Esophagus muscularis mucosa (tissue), 4 donors: ENCODE measurements at regions of chr21 and their contacts with region 1.

Region 1: GRCh38 chr21:36156339-36156814 is 247 bp upstream of the DOP1B start:
- DNase-seq: peak; percentile 100
- H3K4me3 ChIP-seq: peak overlapping the region; percentile 89 to 99 (median 98)
- H3K27ac ChIP-seq: peak overlapping the region; percentile 82 to 90 (median 86)
- H3K4me1 ChIP-seq: peaks cover 7 to 22% (median 20%) of the 10 kb centered on the region in 4 donors
- H3K27me3 ChIP-seq: no peaks in the 10 kb centered on the region
- CTCF ChIP-seq: no peak
- EP300 ChIP-seq: no peak
- POLR2A ChIP-seq: no peak

Region 2: GRCh38 chr21:35882791-35883240 is 273.6 kb before region 1 on chr21:
- intact Hi-C with region 1: no loop called
- DNase-seq: no peak
- H3K4me3 ChIP-seq: no peak overlapping the region
- H3K27ac ChIP-seq: no peak overlapping the region
- H3K4me1 ChIP-seq: no peaks in the 10 kb centered on the region
- H3K27me3 ChIP-seq: peaks cover 0 to 25% (median 0%) of the 10 kb centered on the region in 4 donors
- CTCF ChIP-seq: no peak
- EP300 ChIP-seq: no peak
- POLR2A ChIP-seq: no peak

Region 3: GRCh38 chr21:36135391-36136102 is 20.8 kb before region 1 on chr21:
- intact Hi-C with region 1: loop called (anchors 2 kb)
- DNase-seq: peak; percentile 95
- H3K4me3 ChIP-seq: peak overlapping the region; percentile 72 to 84 (median 81)
- H3K27ac ChIP-seq: peak overlapping the region; percentile 90 to 96 (median 92)
- H3K4me1 ChIP-seq: peaks cover 24 to 34% (median 31%) of the 10 kb centered on the region in 4 donors
- H3K27me3 ChIP-seq: no peaks in the 10 kb centered on the region
- CTCF ChIP-seq: no peak
- EP300 ChIP-seq: no peak
- POLR2A ChIP-seq: peak; percentile 42